Gastrocnemius medialis (tissue), 4 donors: ENCODE measurements at regions of chr9 and their contacts with region 1.

Region 1: GRCh38 chr9:32579706-32580331 is 6.9 kb upstream of the NDUFB6 start:
- DNase-seq: peak; percentile 18 to 31
- ATAC-seq: no peak
- H3K4me3 ChIP-seq: peak overlapping the region in 1 of 4 donors; percentile 4
- H3K27ac ChIP-seq: no peak overlapping the region
- H3K4me1 ChIP-seq: no peaks in the 10 kb centered on the region
- H3K27me3 ChIP-seq: no peaks in the 10 kb centered on the region
- CTCF ChIP-seq: peak; percentile 67 to 91 (median 80)
- POLR2A ChIP-seq: no peak

Region 2: GRCh38 chr9:32371279-32371678 is 208.5 kb before region 1 on chr9:
- in situ Hi-C with region 1: loop called in 1 of 4 experiments (anchors 5 kb)
- intact Hi-C with region 1: no loop called
- DNase-seq: no peak
- ATAC-seq: no peak
- H3K4me3 ChIP-seq: no peak overlapping the region
- H3K27ac ChIP-seq: no peak overlapping the region
- H3K4me1 ChIP-seq: no peaks in the 10 kb centered on the region
- H3K27me3 ChIP-seq: no peaks in the 10 kb centered on the region
- CTCF ChIP-seq: no peak
- POLR2A ChIP-seq: no peak

Region 3: GRCh38 chr9:32384364-32385151 is 195.3 kb before region 1 on chr9 and contains the start of gene ACO1:
- in situ Hi-C with region 1: loop called in 3 of 4 experiments (anchors 5 kb)
- intact Hi-C with region 1: loop called (anchors 1 kb)
- DNase-seq: peak; percentile 80 to 86
- ATAC-seq: peak; percentile 89 to 93
- H3K4me3 ChIP-seq: peak within 1 kb of the TSS; percentile 67 to 94 (median 80)
- H3K27ac ChIP-seq: peak within 1 kb of the TSS; percentile 88 to 96 (median 90)
- H3K4me1 ChIP-seq: peaks cover 20 to 24% of the 10 kb centered on the region in 2 donors
- H3K27me3 ChIP-seq: no peaks in the 10 kb centered on the region
- CTCF ChIP-seq: peak in 1 of 5 experiments; percentile 12
- POLR2A ChIP-seq: peak; percentile 81 to 86
- total RNA-seq, gene ACO1: 28.3 to 35.0 (median 30.3) TPM